ENCODE measurements at regions of chr1 and their contacts with region 1.

Region 1: GRCh38 chr1:91876040-91876470 is 9.9 kb downstream of the TGFBR3 start:
- DNase-seq: peak; percentile 64
- H3K4me3 Mint-ChIP-seq: no peak overlapping the region
- H3K27ac Mint-ChIP-seq: peak overlapping the region; percentile 18
- H3K4me1 Mint-ChIP-seq: peaks cover 75% of the 10 kb centered on the region
- H3K27me3 Mint-ChIP-seq: no peaks in the 10 kb centered on the region

Region 2: DNA sequence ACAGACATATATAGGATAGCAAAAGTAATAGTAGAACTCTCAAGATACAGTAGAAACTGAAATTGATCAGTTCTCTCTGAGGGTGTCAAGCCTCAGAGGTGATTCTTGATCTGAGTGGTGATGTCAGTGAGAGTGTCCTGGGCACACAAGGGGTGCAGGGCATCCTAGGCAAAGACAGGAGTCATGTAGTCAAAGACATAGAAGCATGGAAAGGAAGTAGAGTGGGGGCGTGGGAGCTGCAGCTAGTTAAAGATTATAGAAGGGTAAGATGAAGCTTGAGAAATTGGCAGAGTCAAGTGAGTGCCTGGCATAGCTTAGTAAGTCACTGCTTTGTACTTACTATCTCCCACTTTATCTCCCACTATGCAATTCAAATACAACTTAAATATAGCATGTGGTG is 352.6 kb before region 1 on chr1:
- CTCF ChIA-PET with region 1: no interaction called
- POLR2A ChIA-PET with region 1: no interaction called
- intact Hi-C with region 1: loop called (anchors 5 kb)
- DNase-seq: peak; percentile 65
- H3K4me3 Mint-ChIP-seq: no peak overlapping the region
- H3K27ac Mint-ChIP-seq: no peak overlapping the region
- H3K4me1 Mint-ChIP-seq: peaks cover 32% of the 10 kb centered on the region
- H3K27me3 Mint-ChIP-seq: no peaks in the 10 kb centered on the region

Region 3: GRCh38 chr1:91537281-91537986 is 338.6 kb before region 1 on chr1:
- CTCF ChIA-PET with region 1: no interaction called
- POLR2A ChIA-PET with region 1: no interaction called
- intact Hi-C with region 1: no loop called
- DNase-seq: no peak
- H3K4me3 Mint-ChIP-seq: no peak overlapping the region
- H3K27ac Mint-ChIP-seq: no peak overlapping the region
- H3K4me1 Mint-ChIP-seq: peaks cover 18% of the 10 kb centered on the region
- H3K27me3 Mint-ChIP-seq: no peaks in the 10 kb centered on the region

Region 4: DNA sequence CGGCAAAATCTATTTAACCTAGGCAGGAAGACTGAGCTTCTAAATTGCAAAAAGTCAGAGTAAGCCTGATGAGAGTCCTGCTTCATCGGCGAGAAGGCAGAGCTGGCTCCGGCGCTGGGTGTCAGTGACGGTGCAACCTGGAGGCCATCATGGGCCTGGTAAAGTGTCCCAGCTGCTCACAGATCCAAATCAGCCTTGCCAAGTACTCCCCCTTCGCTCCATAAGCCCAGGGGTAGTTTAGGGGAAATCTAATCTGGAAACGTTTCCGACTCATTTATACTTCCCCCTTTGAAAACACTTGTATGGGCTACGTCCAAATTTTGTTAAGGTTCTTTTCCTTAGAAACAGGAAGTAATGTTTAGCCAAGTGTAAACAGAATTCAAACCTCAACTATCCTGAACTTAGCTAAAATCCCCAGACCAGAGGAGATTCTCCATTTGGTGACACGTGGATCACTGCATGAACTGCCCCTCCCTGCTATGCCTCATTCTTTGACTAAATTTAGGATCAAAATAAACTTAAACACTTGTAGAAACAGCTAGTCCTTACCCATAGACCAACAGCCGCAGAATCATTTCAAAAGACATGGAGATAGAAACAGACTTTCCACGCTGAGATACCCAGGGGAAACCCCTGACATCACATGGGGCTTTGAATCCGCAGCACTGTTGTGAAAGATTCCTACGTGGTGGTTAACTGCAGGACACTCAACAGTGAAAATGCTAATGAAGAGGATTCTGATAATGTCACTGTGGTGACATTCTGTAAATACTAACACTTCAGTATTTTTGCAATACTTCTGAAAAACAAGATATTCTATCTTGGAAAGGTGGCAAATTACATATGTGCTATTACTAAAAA is 162.8 kb before region 1 on chr1:
- CTCF ChIA-PET with region 1: no interaction called
- POLR2A ChIA-PET with region 1: no interaction called
- intact Hi-C with region 1: loop called (anchors 1 kb)
- DNase-seq: peak; percentile 77
- H3K4me3 Mint-ChIP-seq: peak overlapping the region; percentile 24
- H3K27ac Mint-ChIP-seq: peak overlapping the region; percentile 71
- H3K4me1 Mint-ChIP-seq: peaks cover 25% of the 10 kb centered on the region
- H3K27me3 Mint-ChIP-seq: no peaks in the 10 kb centered on the region

Region 5: GRCh38 chr1:91754348-91754747 is 121.7 kb before region 1 on chr1:
- CTCF ChIA-PET with region 1: no interaction called
- POLR2A ChIA-PET with region 1: interaction called, 4 read pairs
- intact Hi-C with region 1: loop called (anchors 1 kb)
- DNase-seq: peak; percentile 77
- H3K4me3 Mint-ChIP-seq: peak overlapping the region; percentile 2
- H3K27ac Mint-ChIP-seq: peak overlapping the region; percentile 67
- H3K4me1 Mint-ChIP-seq: peaks cover 38% of the 10 kb centered on the region
- H3K27me3 Mint-ChIP-seq: peaks cover 1% of the 10 kb centered on the region

Region 6: DNA sequence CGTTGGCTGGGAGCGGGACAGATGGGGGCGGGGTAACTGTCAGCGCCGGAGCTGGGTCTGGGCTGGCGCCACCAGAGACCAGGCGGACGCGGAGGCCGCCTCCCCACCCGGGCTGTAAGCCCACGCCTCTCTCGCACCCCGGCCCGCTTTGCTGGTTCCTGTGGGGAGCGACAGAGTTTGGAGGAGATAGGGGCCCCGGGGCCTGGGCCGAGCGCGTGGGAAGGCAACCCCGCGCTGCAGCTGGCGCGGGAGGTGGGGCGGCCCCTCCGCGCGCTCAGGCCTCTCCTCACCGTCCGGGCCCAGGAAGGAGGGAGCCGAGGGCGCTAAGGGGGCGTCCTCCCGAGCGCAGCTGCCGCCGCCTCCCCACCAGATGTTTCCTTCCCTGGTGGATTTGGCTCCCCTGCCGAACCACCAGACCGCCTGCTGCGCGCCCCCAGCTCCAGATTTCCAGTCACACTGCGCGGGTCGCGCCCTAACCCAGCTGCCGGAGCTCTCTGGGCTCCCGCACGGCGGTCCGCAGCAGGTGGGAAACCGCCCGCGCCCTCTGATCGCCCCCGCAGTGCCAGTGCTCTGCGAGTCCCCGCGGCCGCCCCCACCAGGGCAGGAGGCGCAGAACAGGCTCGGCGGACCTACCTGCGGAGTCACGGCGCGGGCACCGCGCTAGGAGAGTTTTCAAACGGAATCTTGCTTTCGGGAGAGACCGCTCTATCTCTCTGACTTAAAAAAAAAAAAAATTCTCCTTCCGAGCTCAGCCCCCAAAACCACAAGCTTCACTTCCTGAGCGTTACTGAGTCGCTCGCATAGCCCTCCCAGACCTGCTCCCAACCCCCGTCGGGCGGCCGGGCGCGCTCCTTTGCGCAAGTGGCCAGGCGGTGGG is 609.6 kb after region 1 on chr1:
- CTCF ChIA-PET with region 1: no interaction called
- POLR2A ChIA-PET with region 1: no interaction called
- intact Hi-C with region 1: loop called (anchors 10 kb)
- DNase-seq: peak; percentile 93
- H3K4me3 Mint-ChIP-seq: peak overlapping the region; percentile 90
- H3K27ac Mint-ChIP-seq: peak overlapping the region; percentile 98
- H3K4me1 Mint-ChIP-seq: peaks cover 33% of the 10 kb centered on the region
- H3K27me3 Mint-ChIP-seq: no peaks in the 10 kb centered on the region